A549 (cell line): ENCODE measurements at regions of chr5 and their contacts with region 1.

Region 1: GRCh38 chr5:139690064-139690802 is 42.1 kb downstream of the CXXC5 start:
- DNase-seq: peak; percentile 35 to 41
- ATAC-seq: peak; percentile 52 to 69
- H3K4me3 ChIP-seq: no peak overlapping the region
- H3K27ac ChIP-seq: peak overlapping the region; percentile 20 to 69; a peak in 5 of 6 replicates
- H3K4me1 ChIP-seq: peaks cover 32% of the 10 kb centered on the region
- CTCF ChIP-seq: peak; percentile 78
- EP300 ChIP-seq: no peak
- POLR2A ChIP-seq: no peak
- RAD21 ChIP-seq: peak; percentile 79 to 80

Region 2: GRCh38 chr5:139651853-139652787 is 38.1 kb before region 1 on chr5:
- CTCF ChIA-PET with region 1: interaction called, 12 read pairs
- POLR2A ChIA-PET with region 1: no interaction called
- DNase-seq: peak; percentile 64 to 88
- ATAC-seq: peak; percentile 20 to 53; a peak in 3 of 6 replicates
- H3K4me3 ChIP-seq: peak overlapping the region; percentile 16; the same call in 2 of the 3 replicates
- H3K27ac ChIP-seq: peak overlapping the region; percentile 66 to 98
- H3K4me1 ChIP-seq: peaks cover 81% of the 10 kb centered on the region
- CTCF ChIP-seq: no peak
- EP300 ChIP-seq: no peak
- POLR2A ChIP-seq: no peak
- RAD21 ChIP-seq: no peak

Region 3: DNA sequence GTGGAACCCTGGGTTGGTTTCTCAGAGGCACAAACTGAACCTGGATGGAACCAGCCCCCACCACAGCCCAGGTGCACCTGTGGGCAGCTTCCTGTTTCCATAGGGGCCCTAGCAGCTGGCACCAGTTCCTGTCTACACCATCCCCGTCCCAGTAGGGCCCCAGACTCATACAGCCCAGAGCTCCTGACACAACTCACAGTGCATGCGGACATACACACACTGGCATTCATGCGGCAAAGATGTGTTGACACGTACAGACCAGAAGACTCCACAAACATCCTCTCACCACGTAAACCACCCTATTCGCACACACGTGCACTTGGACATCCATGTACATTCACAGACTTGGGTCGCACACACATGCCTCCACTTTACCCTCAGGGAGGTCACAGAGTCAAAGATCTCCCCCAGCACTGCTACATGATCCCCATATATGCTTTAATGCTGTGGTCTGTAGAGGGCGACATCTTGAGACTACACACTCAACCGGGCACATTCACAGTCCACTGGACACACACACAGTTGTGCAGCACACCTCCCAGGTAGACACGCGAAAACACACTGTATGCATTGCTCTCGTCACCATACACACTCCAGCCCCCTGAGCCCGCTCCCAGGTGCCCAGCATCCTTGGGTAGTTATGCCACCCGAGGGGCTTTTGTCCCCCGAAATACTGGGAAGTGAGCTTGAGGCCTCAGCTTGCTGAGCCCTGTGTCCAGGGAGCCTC is 19.7 kb before region 1 on chr5:
- CTCF ChIA-PET with region 1: interaction called, 39 read pairs
- POLR2A ChIA-PET with region 1: no interaction called
- DNase-seq: peak in 1 of 2 experiments; percentile 53
- ATAC-seq: peak in 1 of 2 experiments; percentile 59; a peak in 3 of 6 replicates
- H3K4me3 ChIP-seq: no peak overlapping the region
- H3K27ac ChIP-seq: peak overlapping the region in 1 of 2 experiments; percentile 51; a peak in 1 of 6 replicates
- H3K4me1 ChIP-seq: peaks cover 42% of the 10 kb centered on the region
- CTCF ChIP-seq: peak; percentile 26; the same call in 2 of the 3 replicates
- EP300 ChIP-seq: no peak
- POLR2A ChIP-seq: no peak
- RAD21 ChIP-seq: peak in 1 of 2 experiments; percentile 24; a peak in 1 of 5 replicates

Region 4: DNA sequence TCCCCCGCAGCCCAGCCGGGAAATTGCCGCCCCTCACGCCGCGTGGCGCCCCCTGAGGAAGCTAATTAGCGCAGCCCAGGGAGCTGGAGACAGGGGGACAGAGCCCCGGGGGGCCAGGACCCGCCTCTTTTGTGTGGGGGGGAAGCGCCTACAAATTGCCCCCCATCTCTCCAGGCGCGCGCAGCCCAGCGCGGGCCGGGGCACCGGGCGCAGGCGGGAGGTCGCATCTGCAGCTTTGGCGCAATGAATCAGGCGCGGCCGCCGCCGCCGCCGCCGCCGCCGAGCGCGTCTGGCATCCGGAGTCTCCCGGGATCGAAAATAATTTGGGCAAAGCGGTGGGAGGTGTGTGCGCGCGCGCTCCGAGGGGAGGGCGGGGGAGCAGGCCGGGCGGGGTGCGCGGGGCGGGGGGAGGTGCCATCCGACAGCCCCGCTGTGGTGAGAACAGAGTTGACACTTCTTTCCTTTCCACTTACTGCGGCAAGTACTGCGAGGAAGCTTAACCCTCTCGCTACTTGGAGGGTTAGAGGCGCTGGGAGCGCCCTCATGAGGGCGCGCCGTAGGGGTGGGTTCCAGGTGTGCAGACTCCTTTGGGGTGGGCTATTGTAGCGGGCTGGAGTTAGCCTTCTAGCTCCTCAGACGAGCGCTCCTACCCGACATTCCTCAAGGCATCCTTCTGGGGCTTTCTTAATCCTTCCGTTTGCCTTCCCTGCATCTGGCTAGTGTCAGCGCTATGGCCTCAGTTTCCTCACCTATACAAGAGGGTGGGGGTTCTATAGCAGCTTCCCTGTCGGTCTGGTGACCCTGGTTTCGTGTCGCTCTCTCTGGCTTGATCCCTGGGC is 21.1 kb after region 1 on chr5:
- CTCF ChIA-PET with region 1: interaction called, 11 read pairs
- POLR2A ChIA-PET with region 1: no interaction called
- DNase-seq: peak; percentile 31 to 46
- ATAC-seq: peak; percentile 37 to 65; a peak in 5 of 6 replicates
- H3K4me3 ChIP-seq: peak overlapping the region; percentile 88
- H3K27ac ChIP-seq: peak overlapping the region; percentile 65 to 87
- H3K4me1 ChIP-seq: peaks cover 19% of the 10 kb centered on the region; the same call in 2 of the 3 replicates
- CTCF ChIP-seq: no peak
- EP300 ChIP-seq: no peak
- POLR2A ChIP-seq: no peak
- RAD21 ChIP-seq: peak; percentile 24 to 39; a peak in 2 of 5 replicates

Region 5: DNA sequence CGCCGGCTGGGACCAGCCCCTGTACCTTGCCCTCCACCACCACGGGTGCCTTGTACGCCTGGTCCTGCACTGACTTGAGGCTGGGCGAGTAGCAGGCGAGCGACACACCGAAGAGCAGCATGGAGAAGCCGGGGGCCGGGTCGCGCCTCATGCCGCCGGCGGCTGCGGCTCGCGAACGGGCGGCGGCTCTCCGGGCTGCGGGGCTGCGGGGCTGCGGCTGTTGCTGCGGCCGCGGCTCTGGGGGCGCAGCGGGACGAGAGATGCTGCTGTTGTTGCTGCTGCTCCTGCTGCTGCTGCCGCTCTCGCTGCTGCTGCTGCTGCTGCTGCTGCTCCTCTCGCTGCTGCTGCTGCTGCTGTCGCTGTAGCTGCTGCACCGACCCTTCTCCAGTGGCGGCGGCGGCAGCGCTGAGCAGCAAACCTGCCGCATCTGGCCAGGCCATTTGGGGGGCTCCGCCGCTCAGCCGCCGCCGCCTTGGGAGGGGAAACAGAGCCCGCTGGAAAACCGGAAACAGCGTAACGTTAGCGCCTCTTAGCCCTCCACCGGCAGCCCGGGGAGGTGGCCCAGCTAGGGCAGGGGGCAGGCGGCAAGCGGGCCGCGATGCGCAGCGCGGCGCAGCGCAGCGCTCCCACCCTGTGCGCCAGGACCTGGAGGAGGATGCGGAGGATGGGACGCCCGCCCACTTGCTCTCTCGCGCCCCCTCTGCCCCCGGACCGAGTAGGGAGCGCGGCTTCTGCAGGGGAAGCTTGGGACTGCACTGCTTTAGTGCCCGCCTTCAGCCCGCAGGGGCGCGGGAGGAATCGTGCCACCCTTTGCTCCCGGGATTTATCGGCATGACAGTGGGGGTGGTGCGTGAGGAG is 352.6 kb after region 1 on chr5 and contains the start of gene NRG2:
- CTCF ChIA-PET with region 1: no interaction called
- POLR2A ChIA-PET with region 1: no interaction called
- DNase-seq: peak; percentile 83 to 89
- ATAC-seq: peak; percentile 86 to 95
- H3K4me3 ChIP-seq: peak within 1 kb of the TSS; percentile 54
- H3K27ac ChIP-seq: peak within 1 kb of the TSS; percentile 47 to 78
- H3K4me1 ChIP-seq: peaks cover 17% of the 10 kb centered on the region; the same call in 2 of the 3 replicates
- CTCF ChIP-seq: peak; percentile 58
- EP300 ChIP-seq: no peak
- POLR2A ChIP-seq: peak; percentile 48
- RAD21 ChIP-seq: no peak; a peak in 1 of 5 replicates
- polyA plus RNA-seq, gene NRG2: 0.65 and 1.1 TPM in 2 replicates